Astrocyte of the spinal cord (primary cell): ENCODE measurements at regions of chr3 and their contacts with region 1.

Region 1: GRCh38 chr3:138941259-138941885 is 5.6 kb downstream of the FOXL2 start:
- DNase-seq: peak; percentile 36
- H3K4me3 ChIP-seq: no peak overlapping the region
- CTCF ChIP-seq: peak; percentile 72

Region 2: GRCh38 chr3:138256022-138256421 is 685.4 kb before region 1 on chr3:
- in situ Hi-C with region 1: no loop called
- DNase-seq: no peak
- H3K4me3 ChIP-seq: no peak overlapping the region
- CTCF ChIP-seq: no peak

Region 3: DNA sequence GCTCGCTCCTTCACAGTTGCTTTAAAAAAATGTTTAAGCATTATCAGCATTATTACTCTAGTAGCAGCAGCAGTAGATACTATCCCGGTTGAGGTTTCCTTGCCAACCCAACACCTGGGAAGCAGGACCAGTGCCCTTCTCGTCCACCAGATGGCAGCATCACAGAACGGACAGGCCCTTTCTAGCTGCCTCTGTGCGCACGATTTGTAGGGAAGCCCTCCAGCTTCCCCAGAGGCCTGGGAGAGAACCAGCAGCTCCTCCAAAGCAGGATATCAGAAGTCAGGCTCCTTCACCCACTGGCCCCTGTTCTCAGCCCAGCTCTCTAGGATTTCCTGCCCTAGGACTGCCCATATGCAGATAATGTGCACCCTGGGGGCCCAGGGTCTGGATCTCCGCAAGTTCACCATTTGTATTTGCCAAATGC is 523.8 kb before region 1 on chr3:
- in situ Hi-C with region 1: no loop called
- DNase-seq: peak; percentile 80
- H3K4me3 ChIP-seq: no peak overlapping the region
- CTCF ChIP-seq: peak; percentile 99

Region 4: GRCh38 chr3:139187650-139188049 is 246.3 kb after region 1 on chr3:
- in situ Hi-C with region 1: no loop called
- DNase-seq: no peak
- H3K4me3 ChIP-seq: no peak overlapping the region
- CTCF ChIP-seq: no peak

Region 5: GRCh38 chr3:139343895-139344856 is 402.8 kb after region 1 on chr3 and contains the start of gene MRPS22:
- in situ Hi-C with region 1: loop called (anchors 10 kb)
- DNase-seq: peak; percentile 92
- H3K4me3 ChIP-seq: peak within 1 kb of the TSS; percentile 97
- CTCF ChIP-seq: no peak